Mammary epithelial cell (primary cell): ENCODE measurements at regions of chr7 and their contacts with region 1.

Region 1: DNA sequence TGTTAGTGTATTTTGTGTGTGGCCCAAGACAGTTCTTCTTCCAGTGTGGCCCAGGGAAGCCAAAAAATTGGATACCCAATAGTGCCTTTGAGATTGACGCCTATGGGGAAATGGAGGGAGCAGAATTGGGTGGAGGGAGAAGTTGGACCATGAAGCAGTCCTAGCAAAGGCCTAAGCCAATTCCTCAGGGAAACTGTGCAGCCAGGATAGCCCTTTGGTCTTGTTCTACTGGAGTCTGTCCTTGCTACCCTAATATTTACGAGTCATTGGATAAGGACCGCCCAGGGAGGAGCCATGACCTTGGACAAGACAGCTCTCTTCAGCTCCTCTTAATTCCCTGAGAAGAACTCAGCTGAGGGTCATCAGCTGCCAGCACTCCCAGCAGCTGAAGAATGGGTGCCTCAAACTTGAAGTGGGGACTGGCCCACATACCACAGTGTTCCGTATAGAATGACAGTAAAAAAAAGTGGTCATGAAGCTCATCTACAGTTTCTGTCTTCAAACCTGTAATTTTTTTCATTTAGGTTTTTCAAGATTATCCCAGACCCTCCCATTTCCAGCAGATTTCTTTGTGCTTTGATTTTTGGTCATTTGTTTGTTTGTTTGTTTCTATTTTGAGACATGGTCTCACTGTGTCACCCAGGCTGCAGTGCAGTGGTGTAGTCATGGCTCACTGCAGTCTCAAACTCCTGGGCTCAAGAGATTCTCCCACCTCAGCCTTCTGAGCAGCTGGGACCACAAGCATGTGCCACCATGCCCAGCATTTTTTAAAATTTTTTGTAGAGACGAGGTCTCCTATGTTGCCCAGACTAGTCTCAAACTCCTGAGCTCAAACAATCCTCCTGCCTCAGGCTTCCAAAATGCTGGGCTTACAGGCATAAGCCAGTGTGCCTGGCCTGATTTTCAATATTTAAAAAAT is 81.2 kb downstream of the C1GALT1 start:
- DNase-seq: no peak
- H3K4me3 ChIP-seq: no peak overlapping the region
- H3K27ac ChIP-seq: no peak overlapping the region
- H3K4me1 ChIP-seq: no peaks in the 10 kb centered on the region
- H3K27me3 ChIP-seq: no peaks in the 10 kb centered on the region
- CTCF ChIP-seq: no peak

Region 2: GRCh38 chr7:7352845-7353244 is 89.3 kb after region 1 on chr7:
- CTCF ChIA-PET with region 1: no interaction called
- dilution Hi-C with region 1: no loop called
- in situ Hi-C with region 1: no loop called
- intact Hi-C with region 1: loop called (anchors 5 kb)
- DNase-seq: peak; percentile 78
- H3K4me3 ChIP-seq: no peak overlapping the region
- H3K27ac ChIP-seq: no peak overlapping the region
- H3K4me1 ChIP-seq: peaks cover 7% of the 10 kb centered on the region
- H3K27me3 ChIP-seq: no peaks in the 10 kb centered on the region
- CTCF ChIP-seq: peak; percentile 46 to 73

Region 3: DNA sequence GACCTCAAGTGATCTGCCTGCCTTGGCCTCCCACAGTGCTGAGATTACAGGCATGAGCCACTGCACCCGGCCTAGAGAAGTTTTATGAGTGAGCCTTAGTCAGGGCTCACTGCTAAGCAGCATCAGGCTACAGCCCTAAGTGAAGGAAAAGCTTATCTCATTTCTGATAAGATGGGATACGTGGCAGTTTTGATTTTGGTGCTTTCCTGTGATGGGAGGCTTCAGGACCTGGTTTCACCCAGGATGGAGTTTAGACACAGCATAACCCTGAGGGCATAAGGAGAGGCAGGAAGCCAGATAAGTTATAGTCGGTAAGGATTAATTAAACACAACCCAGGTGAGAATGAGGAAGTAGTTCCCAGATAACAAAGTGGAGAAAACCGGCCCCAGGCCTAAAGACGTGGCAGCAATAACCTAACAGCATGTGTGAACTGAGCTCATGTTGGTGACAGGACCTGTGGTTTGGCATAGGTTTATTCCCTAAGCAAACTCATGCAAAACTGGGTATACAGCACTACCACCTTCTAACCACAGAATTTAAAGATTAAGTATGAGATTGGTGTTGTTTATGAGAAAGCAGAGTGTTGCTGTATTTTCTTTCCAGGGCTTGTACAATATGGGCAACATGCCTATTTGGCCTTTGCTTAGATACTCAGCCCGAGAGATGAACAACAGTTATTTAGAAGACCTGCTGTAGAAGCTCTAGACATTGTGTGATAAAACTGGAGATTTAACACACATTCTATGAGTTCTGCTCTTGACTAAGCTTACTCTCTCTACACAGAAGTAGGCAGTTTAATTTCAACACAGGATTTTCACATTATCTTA is 152.7 kb after region 1 on chr7:
- CTCF ChIA-PET with region 1: no interaction called
- dilution Hi-C with region 1: no loop called
- in situ Hi-C with region 1: no loop called
- intact Hi-C with region 1: loop called (anchors 5 kb)
- DNase-seq: peak; percentile 69
- H3K4me3 ChIP-seq: no peak overlapping the region
- H3K27ac ChIP-seq: no peak overlapping the region
- H3K4me1 ChIP-seq: peaks cover 6% of the 10 kb centered on the region
- H3K27me3 ChIP-seq: no peaks in the 10 kb centered on the region
- CTCF ChIP-seq: no peak